Transverse colon (tissue), 4 donors: ENCODE measurements at regions of chr5 and their contacts with region 1.

Region 1: DNA sequence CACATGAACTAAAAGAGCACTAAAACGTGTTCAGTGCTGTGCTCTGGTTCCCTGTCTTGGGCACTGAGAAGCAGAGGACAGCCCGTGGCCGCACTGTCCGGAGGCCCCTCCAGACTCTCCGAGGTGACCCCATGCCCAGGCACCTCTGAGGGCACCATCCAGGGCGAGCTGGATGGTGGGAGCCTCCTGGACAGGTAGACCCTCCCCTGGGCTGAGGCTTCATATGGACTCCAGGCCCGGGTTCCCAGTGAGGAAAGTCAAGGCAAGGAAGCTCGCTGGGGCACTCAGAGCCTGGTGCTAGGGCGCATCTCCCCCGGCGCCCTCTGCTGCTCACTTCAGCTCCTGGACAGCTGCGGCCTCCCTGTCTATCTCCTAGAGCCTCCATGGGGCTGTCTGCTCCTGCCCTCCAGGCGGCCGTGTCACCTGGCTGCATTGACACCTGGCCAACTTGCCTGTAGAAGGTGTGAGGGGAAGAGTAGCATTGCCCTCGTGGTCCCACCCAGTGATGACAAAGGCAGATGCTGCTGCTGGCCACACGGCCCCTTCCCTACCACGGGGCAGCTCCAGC is 178.2 kb upstream of the IRX1 start:
- DNase-seq: no peak
- H3K4me3 ChIP-seq: no peak overlapping the region
- H3K27ac ChIP-seq: no peak overlapping the region
- H3K4me1 ChIP-seq: no peaks in the 10 kb centered on the region
- H3K27me3 ChIP-seq: no peaks in the 10 kb centered on the region
- CTCF ChIP-seq: no peak
- EP300 ChIP-seq: no peak
- POLR2A ChIP-seq: no peak

Region 2: GRCh38 chr5:3389471-3390026 is 27.9 kb before region 1 on chr5:
- in situ Hi-C with region 1: no loop called
- intact Hi-C with region 1: loop called (anchors 2 kb)
- DNase-seq: no peak
- H3K4me3 ChIP-seq: no peak overlapping the region
- H3K27ac ChIP-seq: no peak overlapping the region
- H3K4me1 ChIP-seq: no peaks in the 10 kb centered on the region
- H3K27me3 ChIP-seq: no peaks in the 10 kb centered on the region
- CTCF ChIP-seq: no peak
- EP300 ChIP-seq: no peak
- POLR2A ChIP-seq: no peak

Region 3: GRCh38 chr5:3429962-3430361 is 12.5 kb after region 1 on chr5:
- in situ Hi-C with region 1: no loop called
- intact Hi-C with region 1: no loop called
- DNase-seq: no peak
- H3K4me3 ChIP-seq: no peak overlapping the region
- H3K27ac ChIP-seq: no peak overlapping the region
- H3K4me1 ChIP-seq: no peaks in the 10 kb centered on the region
- H3K27me3 ChIP-seq: no peaks in the 10 kb centered on the region
- CTCF ChIP-seq: no peak
- EP300 ChIP-seq: no peak
- POLR2A ChIP-seq: no peak